HEK293 (cell line): ENCODE measurements at regions of chr5 and their contacts with region 1.

Region 1: DNA sequence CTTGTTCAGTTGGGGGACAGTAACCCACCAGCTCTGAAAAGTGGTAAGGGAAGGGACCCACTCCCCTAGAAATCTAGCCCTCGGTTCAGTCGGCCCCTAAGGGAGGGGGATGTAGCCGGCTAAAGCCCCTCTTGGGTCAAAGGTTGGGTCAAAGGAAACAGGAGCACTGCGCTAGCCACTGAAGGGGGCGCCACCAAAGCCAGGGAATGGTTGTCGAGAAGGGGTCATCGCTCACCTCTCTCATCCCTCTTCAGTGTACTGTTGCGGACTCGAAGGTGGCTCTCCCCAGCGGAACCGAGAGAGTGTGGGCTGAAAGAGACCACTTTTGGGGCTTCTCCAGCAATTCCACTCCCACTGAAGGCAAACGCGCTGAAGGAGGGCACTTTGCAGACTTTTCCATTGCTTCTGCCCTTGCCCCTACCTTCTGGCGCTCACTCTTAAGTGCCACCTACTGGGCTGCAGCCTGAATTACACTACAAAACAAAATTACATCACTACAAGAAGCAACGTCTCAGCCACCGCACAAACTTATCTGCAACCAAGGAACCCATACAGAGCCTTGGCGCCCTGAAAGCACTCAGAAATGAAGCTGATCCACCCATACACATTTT is 396.9 kb downstream of the PDE4D start:
- H3K4me3 ChIP-seq: no peak overlapping the region
- H3K27ac ChIP-seq: no peak overlapping the region
- H3K4me1 ChIP-seq: no peaks in the 10 kb centered on the region
- CTCF ChIP-seq: no peak

Region 2: DNA sequence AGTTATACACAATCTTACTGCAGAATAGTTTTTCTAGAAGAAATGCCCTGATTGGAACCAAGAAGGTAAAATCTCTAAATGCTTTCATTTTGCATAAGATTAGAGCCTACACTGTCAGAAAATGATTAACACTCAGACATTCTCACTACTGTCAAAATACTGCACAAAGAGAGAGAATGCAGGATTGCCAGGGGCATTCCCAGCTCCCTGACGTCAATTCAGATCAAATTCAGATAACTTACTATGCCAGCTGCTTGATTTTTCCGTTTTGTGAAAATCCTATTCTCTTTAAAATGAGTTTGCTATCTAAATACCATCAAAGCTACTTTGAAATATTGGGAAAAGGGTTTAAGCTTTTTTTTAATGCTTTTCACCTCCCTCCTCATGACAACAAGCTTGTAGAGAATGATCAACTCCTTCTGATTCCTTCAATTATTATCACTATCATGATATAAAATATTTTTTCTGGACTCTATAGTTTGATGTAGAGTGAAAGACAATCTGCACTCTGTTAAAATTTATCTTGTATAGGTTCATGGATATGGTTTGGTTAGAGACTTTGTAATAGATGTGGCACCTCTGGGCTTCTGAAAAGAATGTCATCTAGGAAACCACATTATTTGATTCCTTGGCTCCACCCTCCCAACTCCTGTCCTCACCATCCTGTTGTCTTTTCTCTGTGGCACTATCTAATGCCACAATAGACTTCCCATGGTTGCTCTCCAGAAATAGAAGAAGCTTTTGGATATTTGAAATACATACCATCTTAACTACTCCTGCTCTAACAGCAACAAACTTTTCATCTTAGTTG is 10.8 kb before region 1 on chr5:
- CTCF ChIA-PET with region 1: interaction called, 11 read pairs
- POLR2A ChIA-PET with region 1: no interaction called
- H3K4me3 ChIP-seq: no peak overlapping the region
- H3K27ac ChIP-seq: no peak overlapping the region
- H3K4me1 ChIP-seq: peaks cover 14% of the 10 kb centered on the region
- CTCF ChIP-seq: no peak